CD8-positive, alpha-beta T cell (primary cell): ENCODE measurements at regions of chr2 and their contacts with region 1.

Region 1: DNA sequence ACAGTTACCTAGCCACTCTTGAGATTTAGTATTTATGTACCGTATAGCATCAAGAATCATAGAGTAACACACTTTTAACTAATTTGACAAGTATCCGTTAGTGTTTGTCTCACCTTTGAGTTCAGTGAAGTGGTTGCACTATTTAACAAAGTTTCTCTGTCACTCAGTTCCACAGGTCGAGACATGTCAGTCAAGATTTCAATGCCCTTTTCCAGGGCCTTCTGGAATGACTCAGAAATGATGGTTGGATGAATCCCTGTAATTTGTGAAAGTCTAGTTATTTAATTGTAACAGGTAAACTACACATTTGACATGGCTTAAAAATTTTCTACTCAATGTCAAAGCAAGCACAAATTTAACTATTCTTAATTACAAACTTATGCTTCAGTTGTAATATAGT is 9.7 kb downstream of the CCT4 start:
- DNase-seq: no peak
- ATAC-seq: no peak
- H3K4me3 ChIP-seq: no peak overlapping the region
- H3K4me3 Mint-ChIP-seq: no peak overlapping the region
- H3K27ac ChIP-seq: no peak overlapping the region
- H3K27ac Mint-ChIP-seq: no peak overlapping the region
- H3K4me1 ChIP-seq: no peaks in the 10 kb centered on the region
- H3K4me1 Mint-ChIP-seq: no peaks in the 10 kb centered on the region
- H3K27me3 ChIP-seq: no peaks in the 10 kb centered on the region
- H3K27me3 Mint-ChIP-seq: no peaks in the 10 kb centered on the region
- CTCF ChIP-seq: no peak

Region 2: DNA sequence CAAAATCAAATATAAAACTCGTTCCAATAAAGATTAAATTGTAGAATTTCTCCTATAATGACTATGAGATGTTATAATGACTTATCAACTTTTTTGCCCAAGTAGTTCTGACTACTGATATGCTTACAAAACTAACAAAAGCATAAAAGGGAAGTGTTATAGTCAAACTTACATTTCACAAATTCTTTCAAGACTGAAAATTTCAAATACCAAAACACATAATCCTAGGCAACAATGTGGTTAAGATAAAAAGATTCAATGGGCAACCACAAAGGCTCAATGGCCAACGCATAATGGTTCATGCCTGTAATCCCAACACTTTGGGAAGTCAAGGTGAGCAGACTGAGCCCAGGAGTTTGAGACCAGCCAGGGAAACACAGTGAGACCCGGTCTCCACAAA is 543.6 kb before region 1 on chr2:
- CTCF ChIA-PET with region 1: no interaction called
- POLR2A ChIA-PET with region 1: no interaction called
- intact Hi-C with region 1: loop called in 1 of 2 experiments (anchors 10 kb)
- DNase-seq: no peak
- ATAC-seq: no peak
- H3K4me3 ChIP-seq: no peak overlapping the region
- H3K4me3 Mint-ChIP-seq: no peak overlapping the region
- H3K27ac ChIP-seq: no peak overlapping the region
- H3K27ac Mint-ChIP-seq: no peak overlapping the region
- H3K4me1 ChIP-seq: no peaks in the 10 kb centered on the region
- H3K4me1 Mint-ChIP-seq: peaks cover 2% of the 10 kb centered on the region
- H3K27me3 ChIP-seq: no peaks in the 10 kb centered on the region
- H3K27me3 Mint-ChIP-seq: no peaks in the 10 kb centered on the region
- CTCF ChIP-seq: no peak